ENCODE measurements at regions of chr18 and their contacts with region 1.

Region 1: GRCh38 chr18:48997985-48998831 is 47.4 kb upstream of the SMAD7 start:
- DNase-seq: peak in 1 of 5 donors; percentile 31
- H3K4me3 ChIP-seq: no peak overlapping the region
- H3K27ac ChIP-seq: no peak overlapping the region
- H3K4me1 ChIP-seq: peaks cover 2% of the 10 kb centered on the region
- H3K27me3 ChIP-seq: no peaks in the 10 kb centered on the region
- CTCF ChIP-seq: no peak
- EP300 ChIP-seq: no peak
- POLR2A ChIP-seq: no peak

Region 2: GRCh38 chr18:49045585-49045984 is 47.4 kb after region 1 on chr18:
- intact Hi-C with region 1: loop called in 1 of 4 experiments (anchors 2 kb)
- DNase-seq: no peak
- H3K4me3 ChIP-seq: no peak overlapping the region
- H3K27ac ChIP-seq: no peak overlapping the region
- H3K4me1 ChIP-seq: no peaks in the 10 kb centered on the region
- H3K27me3 ChIP-seq: no peaks in the 10 kb centered on the region
- CTCF ChIP-seq: no peak
- EP300 ChIP-seq: no peak
- POLR2A ChIP-seq: no peak

Region 3: GRCh38 chr18:49757513-49758262 is 759.5 kb after region 1 on chr18:
- intact Hi-C with region 1: no loop called
- DNase-seq: no peak
- H3K4me3 ChIP-seq: no peak overlapping the region
- H3K27ac ChIP-seq: no peak overlapping the region
- H3K4me1 ChIP-seq: no peaks in the 10 kb centered on the region
- H3K27me3 ChIP-seq: no peaks in the 10 kb centered on the region
- CTCF ChIP-seq: no peak
- EP300 ChIP-seq: no peak
- POLR2A ChIP-seq: no peak

Measured in ovary (tissue), 10 donors.